Heart left ventricle (tissue), 16 donors: ENCODE measurements at regions of chr11 and their contacts with region 1.

Region 1: GRCh38 chr11:57546869-57547475 is 9.6 kb downstream of the SMTNL1 start:
- DNase-seq: no peak
- ATAC-seq: no peak
- H3K4me3 ChIP-seq: no peak overlapping the region
- H3K27ac ChIP-seq: no peak overlapping the region
- H3K4me1 ChIP-seq: peaks cover 0 to 11% (median 0%) of the 10 kb centered on the region in 12 donors
- H3K27me3 ChIP-seq: no peaks in the 10 kb centered on the region
- CTCF ChIP-seq: no peak
- POLR2A ChIP-seq: no peak

Region 2: GRCh38 chr11:57815476-57815875 is 268.5 kb after region 1 on chr11:
- intact Hi-C with region 1: loop called in 1 of 10 experiments (anchors 10 kb)
- DNase-seq: no peak
- ATAC-seq: no peak
- H3K4me3 ChIP-seq: no peak overlapping the region
- H3K27ac ChIP-seq: no peak overlapping the region
- H3K4me1 ChIP-seq: peaks cover 0 to 12% (median 0%) of the 10 kb centered on the region in 12 donors
- H3K27me3 ChIP-seq: no peaks in the 10 kb centered on the region
- CTCF ChIP-seq: no peak
- POLR2A ChIP-seq: no peak